WTC11 (cell line): ENCODE measurements at regions of chr10 and their contacts with region 1.

Region 1: DNA sequence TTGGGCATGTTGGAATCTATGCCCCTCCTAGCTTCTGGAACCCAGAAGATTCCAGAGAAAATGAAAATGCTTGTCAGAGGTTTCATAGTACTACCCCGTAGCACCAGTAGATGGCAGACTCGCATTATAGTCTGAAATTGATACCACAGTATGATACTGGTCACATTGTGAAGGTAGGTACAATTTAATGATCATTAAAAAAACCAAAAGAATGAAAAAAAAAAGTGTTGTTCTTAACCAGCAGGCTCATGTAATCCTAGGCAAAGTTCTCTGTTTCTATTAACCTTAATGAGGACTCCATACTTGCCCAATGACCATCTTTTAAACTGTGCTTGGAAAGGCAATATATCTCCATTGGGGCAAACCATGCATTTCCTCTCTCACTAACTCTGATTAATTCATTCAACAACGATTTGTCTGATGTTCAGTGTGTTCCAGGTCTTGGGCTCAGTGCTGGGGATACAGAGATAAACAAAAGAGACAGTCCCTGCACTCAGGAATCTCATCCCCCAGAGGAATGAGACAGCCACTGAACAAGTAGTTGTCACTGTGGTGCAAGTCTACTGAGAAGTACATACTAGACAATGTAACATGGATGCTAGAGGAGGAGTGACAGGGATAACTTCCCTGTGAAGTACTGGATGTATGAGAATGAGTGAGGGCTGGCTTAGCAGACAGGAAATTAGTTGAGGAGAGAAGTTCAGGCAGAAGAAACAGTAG is 223.5 kb upstream of the PHYHIPL start:
- DNase-seq: peak; percentile 56
- ATAC-seq: peak; percentile 89
- H3K4me3 Mint-ChIP-seq: no peak overlapping the region
- H3K27ac Mint-ChIP-seq: no peak overlapping the region
- H3K4me1 Mint-ChIP-seq: no peaks in the 10 kb centered on the region
- H3K27me3 Mint-ChIP-seq: no peaks in the 10 kb centered on the region
- CTCF ChIP-seq: peak; percentile 59; the same call in 1 of the 2 replicates

Region 2: GRCh38 chr10:58967551-58968388 is 14.9 kb after region 1 on chr10:
- CTCF ChIA-PET with region 1: interaction called, 14 read pairs
- POLR2A ChIA-PET with region 1: no interaction called
- DNase-seq: peak; percentile 83
- ATAC-seq: peak; percentile 89
- H3K4me3 Mint-ChIP-seq: peak overlapping the region; percentile 64
- H3K27ac Mint-ChIP-seq: 0 out of 2 replicates have a peak overlapping the region, but pooled peaks have one; percentile 27
- H3K4me1 Mint-ChIP-seq: peaks cover 55% of the 10 kb centered on the region
- H3K27me3 Mint-ChIP-seq: peaks cover 69% of the 10 kb centered on the region
- CTCF ChIP-seq: no peak

Region 3: DNA sequence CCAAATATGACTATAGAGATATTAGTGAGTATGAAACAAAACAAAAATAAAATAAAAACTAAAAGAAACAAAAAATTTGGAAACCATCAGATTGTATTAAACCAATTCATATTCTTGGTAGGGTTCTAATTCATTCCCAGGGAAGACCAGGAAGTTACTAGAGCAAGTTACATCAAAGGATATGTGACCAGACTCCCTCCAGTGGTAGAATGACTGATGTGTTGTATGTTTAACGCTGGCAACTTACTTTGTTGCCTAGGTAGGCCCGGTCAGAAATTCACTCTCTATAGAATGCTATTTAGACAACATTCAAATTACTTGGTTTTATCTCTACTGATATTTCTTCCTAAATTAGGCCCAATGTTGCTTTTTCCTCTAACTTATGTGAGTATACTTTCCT is 228.8 kb after region 1 on chr10:
- CTCF ChIA-PET with region 1: interaction called, 12 read pairs
- POLR2A ChIA-PET with region 1: no interaction called
- DNase-seq: no peak
- ATAC-seq: peak; percentile 65
- H3K4me3 Mint-ChIP-seq: no peak overlapping the region
- H3K27ac Mint-ChIP-seq: no peak overlapping the region
- H3K4me1 Mint-ChIP-seq: peaks cover 6% of the 10 kb centered on the region
- H3K27me3 Mint-ChIP-seq: peaks cover 22% of the 10 kb centered on the region
- CTCF ChIP-seq: 0 out of 2 replicates have a peak, but pooled peaks have one; percentile 30